A673 (cell line): ENCODE measurements at regions of chr6 and their contacts with region 1.

Region 1: GRCh38 chr6:135535989-135536414 is 38.5 kb upstream of the AHI1 start:
- DNase-seq: peak; percentile 53
- H3K4me3 ChIP-seq: no peak overlapping the region
- H3K27ac ChIP-seq: no peak overlapping the region
- H3K4me1 ChIP-seq: no peaks in the 10 kb centered on the region
- H3K27me3 ChIP-seq: peaks cover 41% of the 10 kb centered on the region
- CTCF ChIP-seq: peak; percentile 78

Region 2: GRCh38 chr6:135451693-135452092 is 84.3 kb before region 1 on chr6:
- CTCF ChIA-PET with region 1: no interaction called
- POLR2A ChIA-PET with region 1: no interaction called
- intact Hi-C with region 1: loop called (anchors 10 kb)
- DNase-seq: peak; percentile 64
- H3K4me3 ChIP-seq: no peak overlapping the region
- H3K27ac ChIP-seq: no peak overlapping the region
- H3K4me1 ChIP-seq: no peaks in the 10 kb centered on the region
- H3K27me3 ChIP-seq: no peaks in the 10 kb centered on the region
- CTCF ChIP-seq: peak; percentile 71

Region 3: DNA sequence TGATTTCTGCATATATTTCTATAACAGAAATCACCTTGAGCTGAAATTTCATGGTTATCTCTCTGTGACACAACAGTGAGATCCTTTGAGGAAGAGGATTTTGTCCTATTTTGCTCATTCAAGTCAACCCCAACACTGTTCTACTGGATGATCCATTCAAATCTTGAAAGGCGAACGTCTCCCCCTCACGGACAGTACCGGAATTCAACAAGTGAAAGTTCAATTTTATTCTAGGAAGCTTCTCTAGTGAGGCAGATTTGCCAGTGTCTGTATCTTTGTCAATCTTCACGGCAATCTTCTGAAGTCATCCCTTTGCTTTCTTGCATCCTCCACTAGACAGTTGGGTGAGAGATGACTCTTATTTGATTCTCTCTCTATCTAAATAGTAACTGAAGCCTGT is 223.8 kb after region 1 on chr6:
- CTCF ChIA-PET with region 1: no interaction called
- POLR2A ChIA-PET with region 1: no interaction called
- intact Hi-C with region 1: loop called (anchors 5 kb)
- DNase-seq: peak; percentile 59
- H3K4me3 ChIP-seq: no peak overlapping the region
- H3K27ac ChIP-seq: no peak overlapping the region
- H3K4me1 ChIP-seq: no peaks in the 10 kb centered on the region
- H3K27me3 ChIP-seq: peaks cover 10% of the 10 kb centered on the region
- CTCF ChIP-seq: peak; percentile 52

Region 4: GRCh38 chr6:135909737-135910387 is 373.9 kb after region 1 on chr6:
- CTCF ChIA-PET with region 1: interaction called, 12 read pairs
- POLR2A ChIA-PET with region 1: no interaction called
- intact Hi-C with region 1: loop called (anchors 1 kb)
- DNase-seq: peak; percentile 60
- H3K4me3 ChIP-seq: no peak overlapping the region
- H3K27ac ChIP-seq: no peak overlapping the region
- H3K4me1 ChIP-seq: no peaks in the 10 kb centered on the region
- H3K27me3 ChIP-seq: peaks cover 4% of the 10 kb centered on the region
- CTCF ChIP-seq: peak; percentile 81

Region 5: GRCh38 chr6:136113736-136114173 is 577.8 kb after region 1 on chr6:
- CTCF ChIA-PET with region 1: no interaction called
- POLR2A ChIA-PET with region 1: no interaction called
- intact Hi-C with region 1: no loop called
- DNase-seq: peak; percentile 88
- H3K4me3 ChIP-seq: no peak overlapping the region
- H3K27ac ChIP-seq: no peak overlapping the region
- H3K4me1 ChIP-seq: peaks cover 13% of the 10 kb centered on the region
- H3K27me3 ChIP-seq: no peaks in the 10 kb centered on the region
- CTCF ChIP-seq: no peak